Activated naive CD4-positive, alpha-beta T cell treated with anti-CD3 and anti-CD28 coated beads for 36 hours (primary cell): ENCODE measurements at regions of chr1 and their contacts with region 1.

Region 1: GRCh38 chr1:207404849-207405525 is 49.1 kb upstream of the CR2 start:
- DNase-seq: no peak
- H3K4me3 Mint-ChIP-seq: no peak overlapping the region
- H3K27ac Mint-ChIP-seq: no peak overlapping the region
- H3K4me1 Mint-ChIP-seq: peaks cover 13% of the 10 kb centered on the region
- H3K27me3 Mint-ChIP-seq: no peaks in the 10 kb centered on the region

Region 2: GRCh38 chr1:207060592-207060991 is 344.4 kb before region 1 on chr1:
- CTCF ChIA-PET with region 1: interaction called, 12 read pairs
- intact Hi-C with region 1: no loop called
- DNase-seq: no peak
- H3K4me3 Mint-ChIP-seq: no peak overlapping the region
- H3K27ac Mint-ChIP-seq: no peak overlapping the region
- H3K4me1 Mint-ChIP-seq: no peaks in the 10 kb centered on the region
- H3K27me3 Mint-ChIP-seq: no peaks in the 10 kb centered on the region

Region 3: DNA sequence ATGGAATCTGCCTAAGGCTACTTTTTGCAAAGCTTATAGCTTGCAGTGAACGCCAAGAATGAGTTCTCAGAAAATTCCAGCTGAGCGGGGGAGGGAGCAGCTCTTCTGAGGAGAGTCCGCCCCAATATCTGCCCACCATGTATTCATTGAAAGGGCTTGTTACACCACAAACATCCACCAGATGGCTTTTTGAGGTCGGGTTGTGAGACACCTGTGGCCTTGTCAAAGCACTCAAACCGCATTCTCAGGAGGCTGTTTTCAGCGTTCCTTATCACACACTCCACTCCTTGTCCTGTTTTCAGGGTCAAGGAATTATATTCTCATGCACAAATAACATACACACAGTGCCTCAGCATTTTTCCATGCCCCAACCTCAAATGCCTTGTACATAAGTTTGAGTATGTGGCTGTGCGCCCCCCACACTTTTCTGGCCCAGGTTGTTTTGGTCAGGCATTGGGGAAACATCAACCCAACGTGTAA is 320.2 kb before region 1 on chr1:
- CTCF ChIA-PET with region 1: interaction called, 70 read pairs
- intact Hi-C with region 1: loop called (anchors 1 kb)
- DNase-seq: peak; percentile 73
- H3K4me3 Mint-ChIP-seq: no peak overlapping the region
- H3K27ac Mint-ChIP-seq: no peak overlapping the region
- H3K4me1 Mint-ChIP-seq: peaks cover 23% of the 10 kb centered on the region
- H3K27me3 Mint-ChIP-seq: no peaks in the 10 kb centered on the region

Region 4: DNA sequence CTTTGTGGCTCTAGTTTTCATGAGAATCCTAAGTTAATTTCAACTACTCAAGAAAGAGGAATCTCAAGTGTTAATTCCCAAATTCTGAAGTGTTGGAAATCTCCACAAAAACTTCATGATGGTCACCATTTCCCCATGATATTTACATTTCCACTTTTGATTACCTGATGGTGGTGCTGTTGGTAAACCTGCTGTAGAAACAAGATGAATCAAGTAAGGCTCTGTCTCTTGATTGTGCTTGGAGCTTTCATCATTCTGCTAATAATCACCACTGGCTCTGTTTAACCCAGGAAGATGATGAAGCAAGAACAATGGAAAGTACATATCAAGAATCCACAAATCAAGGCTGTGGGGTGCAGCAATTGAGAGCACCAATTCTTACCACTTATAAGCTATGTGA is 223.1 kb before region 1 on chr1:
- CTCF ChIA-PET with region 1: interaction called, 6 read pairs
- intact Hi-C with region 1: loop called (anchors 1 kb)
- DNase-seq: no peak
- H3K4me3 Mint-ChIP-seq: no peak overlapping the region
- H3K27ac Mint-ChIP-seq: no peak overlapping the region
- H3K4me1 Mint-ChIP-seq: no peaks in the 10 kb centered on the region
- H3K27me3 Mint-ChIP-seq: no peaks in the 10 kb centered on the region

Region 5: DNA sequence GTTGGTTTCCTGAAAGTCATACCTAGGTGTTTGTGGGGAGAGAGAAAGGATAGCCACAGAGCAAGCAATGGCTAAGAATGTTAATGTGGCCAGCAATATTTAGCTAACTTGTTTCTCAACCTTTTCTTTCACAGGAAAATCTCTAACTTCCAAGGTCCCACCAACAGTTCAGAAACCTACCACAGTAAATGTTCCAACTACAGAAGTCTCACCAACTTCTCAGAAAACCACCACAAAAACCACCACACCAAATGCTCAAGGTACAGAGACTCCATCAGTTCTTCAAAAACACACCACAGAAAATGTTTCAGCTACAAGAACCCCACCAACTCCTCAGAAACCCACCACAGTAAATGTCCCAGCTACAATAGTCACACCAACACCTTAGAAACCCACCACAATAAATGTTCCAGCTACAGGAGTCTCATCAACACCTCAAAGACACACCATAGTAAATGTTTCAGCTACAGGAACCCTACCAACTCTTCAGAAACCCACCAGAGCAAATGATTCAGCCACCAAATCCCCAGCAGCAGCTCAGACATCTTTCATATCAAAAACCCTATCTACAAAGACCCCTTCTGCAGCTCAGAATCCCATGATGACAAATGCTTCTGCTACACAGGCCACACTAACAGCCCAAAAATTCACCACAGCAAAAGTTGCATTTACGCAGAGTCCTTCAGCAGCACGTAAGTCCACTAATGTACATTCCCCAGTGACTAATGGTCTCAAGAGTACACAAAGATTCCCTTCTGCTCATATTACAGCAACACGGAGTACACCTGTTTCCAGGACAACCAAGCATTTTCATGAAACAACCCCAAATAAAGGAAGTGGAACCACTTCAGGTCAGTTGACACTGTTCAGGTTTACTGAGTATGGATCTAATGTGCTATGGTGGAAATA is 68.2 kb before region 1 on chr1:
- CTCF ChIA-PET with region 1: interaction called, 10 read pairs
- intact Hi-C with region 1: no loop called
- DNase-seq: peak; percentile 43
- H3K4me3 Mint-ChIP-seq: no peak overlapping the region
- H3K27ac Mint-ChIP-seq: peak overlapping the region; percentile 82
- H3K4me1 Mint-ChIP-seq: peaks cover 68% of the 10 kb centered on the region
- H3K27me3 Mint-ChIP-seq: no peaks in the 10 kb centered on the region

Region 6: GRCh38 chr1:207910591-207911354 is 505.8 kb after region 1 on chr1 and contains the start of gene CD34:
- CTCF ChIA-PET with region 1: no interaction called
- intact Hi-C with region 1: no loop called
- DNase-seq: peak; percentile 51
- H3K4me3 Mint-ChIP-seq: peak within 1 kb of the TSS; percentile 63
- H3K27ac Mint-ChIP-seq: no peak within 1 kb of the TSS
- H3K4me1 Mint-ChIP-seq: peaks cover 16% of the 10 kb centered on the region
- H3K27me3 Mint-ChIP-seq: peaks cover 52% of the 10 kb centered on the region
- total RNA-seq, gene CD34: 0.02 TPM